AG04449 (cell line): ENCODE measurements at regions of chr12 and their contacts with region 1.

Region 1: DNA sequence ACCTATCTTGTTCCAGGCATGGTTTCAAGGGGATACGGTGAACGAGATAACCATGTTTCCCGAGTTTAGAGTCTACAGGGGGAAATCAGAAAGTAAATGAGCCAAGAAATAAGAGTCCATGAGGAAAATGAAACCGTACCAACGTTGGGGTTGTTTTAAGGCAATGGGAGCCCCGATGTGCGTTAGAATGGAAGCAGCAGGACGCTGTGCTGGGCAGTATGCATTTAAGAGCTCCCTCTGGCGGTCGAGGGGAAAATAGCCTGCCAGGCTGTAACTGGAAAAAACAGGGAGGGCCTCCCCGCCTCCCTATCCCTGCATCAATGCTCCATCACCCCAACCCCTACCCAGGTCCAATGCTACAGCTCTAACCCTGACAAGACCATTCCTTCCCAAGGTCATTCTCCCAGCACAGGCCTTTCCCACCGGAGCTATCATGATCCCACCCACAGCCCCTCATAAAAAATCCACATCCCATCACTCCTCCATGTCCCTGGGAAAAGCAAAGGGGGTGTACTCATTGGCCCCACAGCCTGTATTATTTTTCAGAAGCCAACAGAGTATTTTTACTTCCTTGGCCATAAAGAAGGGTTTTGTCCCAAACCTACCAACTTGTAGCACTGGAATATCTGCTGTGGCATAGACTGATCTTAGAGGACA is 226.3 kb upstream of the NOS1 start:
- DNase-seq: no peak
- H3K4me3 ChIP-seq: no peak overlapping the region
- CTCF ChIP-seq: peak; percentile 77

Region 2: DNA sequence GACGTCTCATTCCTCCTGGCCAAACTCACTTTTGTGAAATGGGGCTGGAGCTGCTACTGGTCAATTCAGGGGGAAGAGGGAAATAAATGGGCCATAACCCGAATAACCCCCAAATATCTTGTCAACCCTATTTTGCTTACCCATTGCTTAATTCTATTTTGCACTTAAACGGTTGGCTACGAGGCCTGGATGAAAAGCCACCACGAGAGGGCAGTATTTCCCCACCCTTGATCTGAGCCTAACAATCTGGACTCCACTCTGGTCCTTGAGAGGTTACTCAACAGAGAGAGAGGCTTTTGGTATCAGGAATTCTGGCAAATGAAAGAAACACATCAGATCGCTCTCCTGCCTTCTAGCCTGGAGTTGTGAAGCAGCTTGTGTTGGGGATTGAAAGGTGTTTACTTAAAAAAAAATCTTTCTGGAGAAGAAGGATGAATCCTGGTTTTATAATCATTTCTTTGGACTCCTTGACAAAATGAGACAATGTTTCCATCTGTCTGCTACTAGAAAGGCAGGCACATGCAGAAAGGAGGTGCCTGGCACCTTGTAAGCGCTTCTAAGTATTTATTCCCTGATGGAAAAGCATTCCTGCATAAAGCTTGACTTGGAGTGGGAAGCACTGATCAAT is 375.1 kb before region 1 on chr12:
- CTCF ChIA-PET with region 1: interaction called, 11 read pairs
- POLR2A ChIA-PET with region 1: no interaction called
- DNase-seq: peak; percentile 36
- H3K4me3 ChIP-seq: no peak overlapping the region
- CTCF ChIP-seq: peak; percentile 79

Region 3: DNA sequence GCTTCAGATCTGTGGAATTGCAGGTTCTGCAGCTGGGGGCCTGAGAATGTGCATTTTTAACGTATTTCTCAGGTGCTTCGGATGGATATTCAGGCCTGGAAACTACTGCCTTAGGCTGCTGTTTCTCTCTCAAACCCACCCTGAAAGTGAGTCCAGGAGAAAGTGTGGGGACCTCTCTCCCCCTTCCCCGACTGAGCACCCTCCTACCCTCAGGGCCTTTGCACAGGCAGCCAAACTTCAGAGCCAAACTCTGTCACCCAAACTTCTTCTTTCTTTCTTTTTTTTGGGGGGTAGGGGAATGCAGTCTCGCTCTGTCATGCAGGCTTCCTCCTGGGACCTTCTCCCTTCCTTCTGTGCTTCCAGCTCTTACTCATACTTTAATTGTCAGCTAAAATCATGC is 315.1 kb before region 1 on chr12:
- CTCF ChIA-PET with region 1: no interaction called
- POLR2A ChIA-PET with region 1: no interaction called
- DNase-seq: no peak
- H3K4me3 ChIP-seq: no peak overlapping the region
- CTCF ChIP-seq: no peak

Region 4: DNA sequence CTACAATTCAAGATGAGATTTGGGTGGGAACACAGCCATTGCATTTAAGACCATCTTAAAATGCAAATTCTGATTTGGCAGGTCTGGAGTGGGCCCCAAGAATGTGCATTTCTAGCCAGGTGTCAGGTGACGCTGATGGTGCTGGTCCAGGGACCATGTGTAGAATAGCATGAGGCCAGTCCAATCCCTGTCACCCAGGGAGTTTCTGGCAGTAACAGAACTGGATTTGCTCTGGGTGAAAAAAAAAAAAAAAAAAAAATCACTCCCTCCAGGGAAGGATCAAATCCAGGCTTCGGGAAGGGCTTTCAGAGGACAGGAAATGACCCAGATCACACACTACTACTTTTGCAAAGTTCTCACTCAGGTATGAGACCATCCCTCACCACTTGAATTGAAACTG is 13.1 kb before region 1 on chr12:
- CTCF ChIA-PET with region 1: interaction called, 31 read pairs
- POLR2A ChIA-PET with region 1: no interaction called
- DNase-seq: no peak
- H3K4me3 ChIP-seq: no peak overlapping the region
- CTCF ChIP-seq: no peak

Region 5: DNA sequence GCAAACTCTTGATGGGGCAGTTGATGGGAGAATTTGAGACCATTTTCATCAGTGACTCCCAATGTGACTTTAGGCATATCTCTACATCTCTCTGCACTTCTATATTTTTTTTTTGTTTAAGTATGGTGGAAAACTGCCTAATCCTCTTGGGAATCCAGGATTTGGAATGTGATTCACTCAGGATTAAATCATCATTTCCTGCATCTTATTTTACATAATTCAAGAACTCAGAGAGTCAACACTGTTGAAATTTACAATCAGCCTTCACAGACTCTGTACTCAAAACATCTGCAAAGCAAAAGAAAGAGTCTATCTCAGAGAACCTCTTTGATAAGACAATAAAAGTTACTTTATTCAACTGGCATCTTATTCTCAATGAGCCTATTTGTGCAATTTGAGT is 34.3 kb after region 1 on chr12:
- CTCF ChIA-PET with region 1: interaction called, 10 read pairs
- POLR2A ChIA-PET with region 1: no interaction called
- DNase-seq: peak; percentile 3
- H3K4me3 ChIP-seq: no peak overlapping the region
- CTCF ChIP-seq: no peak

Region 6: DNA sequence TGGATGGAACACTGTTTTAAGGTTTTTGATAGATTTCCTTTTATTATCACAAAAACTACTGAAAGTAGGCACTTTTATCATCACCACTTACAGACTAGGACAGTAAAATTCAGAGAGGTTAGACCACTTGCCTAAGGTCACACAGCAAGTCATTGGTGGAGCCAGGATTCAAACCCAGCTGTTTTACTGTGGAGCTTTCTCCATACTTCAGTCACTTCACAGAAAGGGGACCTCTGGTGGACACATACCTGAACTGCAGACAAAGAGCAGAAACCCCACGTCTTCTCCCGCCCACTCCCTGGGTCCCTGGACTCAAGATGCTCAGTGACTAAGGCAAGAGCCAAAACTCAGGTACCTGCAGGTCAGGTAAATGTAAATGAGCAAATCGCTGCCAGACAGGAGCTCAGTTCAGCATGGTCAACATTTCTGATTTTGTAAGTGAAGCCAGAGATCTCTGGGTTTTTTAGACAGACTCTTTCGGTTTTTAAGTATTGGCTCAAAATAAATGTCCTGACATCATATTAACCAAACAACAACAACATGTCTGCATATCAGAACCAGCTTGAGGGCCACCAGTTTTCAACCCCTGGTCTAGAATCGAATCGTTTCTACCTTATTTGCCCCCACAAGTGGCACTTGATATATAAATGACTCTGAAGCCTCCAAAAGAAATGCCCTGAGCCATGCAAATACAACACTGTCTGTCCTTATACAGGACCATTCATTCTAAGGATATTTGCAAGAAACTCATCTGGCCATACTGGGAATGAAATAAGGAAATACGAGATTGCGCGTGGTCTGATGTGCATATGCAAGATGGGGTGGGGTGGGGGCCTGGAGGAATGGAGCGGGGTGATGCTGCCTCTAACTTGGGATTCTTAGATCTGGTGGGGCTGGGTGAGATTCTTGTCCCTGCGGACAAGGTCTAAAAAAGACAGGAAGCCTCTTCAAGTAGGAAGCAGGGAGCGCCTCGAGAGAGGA is 270.2 kb after region 1 on chr12:
- CTCF ChIA-PET with region 1: interaction called, 21 read pairs
- POLR2A ChIA-PET with region 1: no interaction called
- DNase-seq: no peak
- H3K4me3 ChIP-seq: no peak overlapping the region
- CTCF ChIP-seq: peak; percentile 50